Activated CD4-positive, alpha-beta T cell treated with anti-CD3 and anti-CD28 coated beads, Interleukin-2, amount 10 ng/mL, durations not matched to agents 24 days and 14 days (primary cell): ENCODE measurements at regions of chr2 and their contacts with region 1.

Region 1: GRCh38 chr2:239288951-239289511 is 111.8 kb downstream of the HDAC4 start:
- DNase-seq: peak; percentile 88
- H3K4me3 Mint-ChIP-seq: peak overlapping the region; percentile 88
- H3K27ac Mint-ChIP-seq: peak overlapping the region; percentile 97
- H3K4me1 Mint-ChIP-seq: peaks cover 70% of the 10 kb centered on the region
- H3K27me3 Mint-ChIP-seq: peaks cover 10% of the 10 kb centered on the region

Region 2: DNA sequence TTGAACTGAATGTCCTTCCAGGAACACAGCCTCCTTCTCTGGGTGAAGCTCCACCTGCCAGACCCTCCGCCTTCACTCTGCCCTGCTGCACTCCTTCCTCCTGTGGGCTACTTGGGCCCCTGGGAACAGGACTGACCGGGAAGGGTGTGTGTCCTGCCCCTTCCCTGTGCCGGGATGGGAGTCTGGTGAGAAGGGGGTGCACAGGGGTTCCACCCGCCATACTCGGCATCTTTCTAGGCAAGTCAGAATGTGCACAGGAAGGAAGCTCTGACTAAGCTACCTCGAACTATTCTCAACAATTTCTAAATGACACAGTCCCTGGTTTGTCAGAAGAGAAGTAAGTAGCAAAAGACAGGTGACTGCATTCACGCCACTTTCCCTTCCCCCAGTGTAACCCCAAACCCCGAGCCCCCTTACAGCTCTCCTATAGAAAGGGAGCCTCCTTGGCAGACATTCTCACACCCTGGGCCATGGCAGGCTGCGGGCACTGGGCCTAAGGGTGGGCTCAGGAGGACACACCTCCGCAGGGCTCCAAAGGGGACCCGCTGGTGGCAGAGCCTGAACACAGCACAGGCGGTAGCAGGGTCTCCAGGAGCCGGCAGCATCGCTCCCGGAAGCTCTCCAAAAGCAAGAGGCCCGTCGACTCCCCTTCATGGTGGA is 72.3 kb before region 1 on chr2:
- intact Hi-C with region 1: loop called (anchors 2 kb)
- DNase-seq: peak; percentile 78
- H3K4me3 Mint-ChIP-seq: peak overlapping the region; percentile 77
- H3K27ac Mint-ChIP-seq: peak overlapping the region; percentile 91
- H3K4me1 Mint-ChIP-seq: peaks cover 43% of the 10 kb centered on the region
- H3K27me3 Mint-ChIP-seq: no peaks in the 10 kb centered on the region

Region 3: DNA sequence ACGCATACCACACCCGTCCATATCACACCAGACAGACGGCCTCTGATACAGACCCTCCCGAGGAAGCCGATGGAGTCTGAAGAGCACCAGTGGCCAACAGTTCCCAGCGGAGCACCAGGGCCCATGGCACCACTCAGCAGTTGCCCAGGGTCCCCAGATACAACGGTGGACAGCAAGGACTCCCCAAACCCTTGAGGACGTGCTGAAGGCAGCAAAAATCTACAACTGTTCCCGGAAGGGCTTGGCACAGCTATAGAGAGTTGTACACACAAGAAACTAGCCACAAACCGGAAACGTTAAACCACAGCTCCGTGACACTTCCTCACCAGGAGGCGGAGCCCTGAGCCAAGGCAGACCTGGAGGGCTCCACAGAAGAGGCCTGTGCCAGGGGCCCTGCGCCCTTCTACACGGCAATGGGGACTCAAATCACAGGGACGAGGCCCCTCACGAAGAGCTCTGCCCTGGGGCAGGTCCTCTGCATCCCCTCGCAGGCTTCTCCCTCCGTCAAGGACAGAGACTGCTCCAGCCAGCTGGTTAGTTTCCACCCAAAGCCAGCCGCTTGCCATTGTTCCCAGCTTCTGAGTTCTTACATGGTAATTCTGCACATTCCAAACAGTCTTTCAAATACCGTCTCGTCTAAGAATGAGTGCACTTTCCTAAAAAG is 21.6 kb before region 1 on chr2:
- intact Hi-C with region 1: loop called (anchors 1 kb)
- DNase-seq: peak; percentile 98
- H3K4me3 Mint-ChIP-seq: peak overlapping the region; percentile 93
- H3K27ac Mint-ChIP-seq: peak overlapping the region; percentile 84
- H3K4me1 Mint-ChIP-seq: peaks cover 76% of the 10 kb centered on the region
- H3K27me3 Mint-ChIP-seq: peaks cover 12% of the 10 kb centered on the region

Region 4: DNA sequence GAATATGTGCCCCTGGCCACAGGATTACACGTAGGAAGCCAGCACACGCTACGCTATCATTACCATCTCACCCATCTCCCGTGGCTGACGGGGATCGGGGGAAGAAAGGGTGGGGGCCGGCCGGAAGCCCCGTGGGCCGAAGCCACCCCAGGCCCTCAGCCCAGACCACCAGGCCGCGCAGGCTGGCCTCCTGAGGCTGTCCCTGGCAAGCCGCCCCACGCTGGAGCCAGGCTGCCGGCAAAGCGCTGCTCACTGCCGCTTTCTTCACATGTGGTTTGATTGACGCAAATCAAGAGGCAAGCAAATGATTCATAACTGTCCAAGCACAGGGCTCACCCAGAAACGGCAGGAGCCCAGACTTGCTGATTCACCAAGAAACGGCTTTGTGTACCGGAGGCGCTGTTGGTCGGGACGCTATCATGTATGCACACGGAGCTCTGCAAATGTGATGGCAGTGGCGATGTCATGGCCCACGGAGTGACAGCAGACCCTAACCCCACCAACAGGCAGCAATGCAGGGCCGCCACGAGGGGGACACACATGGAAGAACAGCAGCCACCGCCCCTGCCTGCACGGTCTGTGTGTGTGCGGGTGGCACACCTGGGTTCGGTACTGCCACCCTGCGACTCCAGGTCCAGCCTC is 13.9 kb before region 1 on chr2:
- intact Hi-C with region 1: loop called (anchors 1 kb)
- DNase-seq: peak; percentile 95
- H3K4me3 Mint-ChIP-seq: peak overlapping the region; percentile 79
- H3K27ac Mint-ChIP-seq: peak overlapping the region; percentile 87
- H3K4me1 Mint-ChIP-seq: peaks cover 70% of the 10 kb centered on the region
- H3K27me3 Mint-ChIP-seq: peaks cover 9% of the 10 kb centered on the region

Region 5: DNA sequence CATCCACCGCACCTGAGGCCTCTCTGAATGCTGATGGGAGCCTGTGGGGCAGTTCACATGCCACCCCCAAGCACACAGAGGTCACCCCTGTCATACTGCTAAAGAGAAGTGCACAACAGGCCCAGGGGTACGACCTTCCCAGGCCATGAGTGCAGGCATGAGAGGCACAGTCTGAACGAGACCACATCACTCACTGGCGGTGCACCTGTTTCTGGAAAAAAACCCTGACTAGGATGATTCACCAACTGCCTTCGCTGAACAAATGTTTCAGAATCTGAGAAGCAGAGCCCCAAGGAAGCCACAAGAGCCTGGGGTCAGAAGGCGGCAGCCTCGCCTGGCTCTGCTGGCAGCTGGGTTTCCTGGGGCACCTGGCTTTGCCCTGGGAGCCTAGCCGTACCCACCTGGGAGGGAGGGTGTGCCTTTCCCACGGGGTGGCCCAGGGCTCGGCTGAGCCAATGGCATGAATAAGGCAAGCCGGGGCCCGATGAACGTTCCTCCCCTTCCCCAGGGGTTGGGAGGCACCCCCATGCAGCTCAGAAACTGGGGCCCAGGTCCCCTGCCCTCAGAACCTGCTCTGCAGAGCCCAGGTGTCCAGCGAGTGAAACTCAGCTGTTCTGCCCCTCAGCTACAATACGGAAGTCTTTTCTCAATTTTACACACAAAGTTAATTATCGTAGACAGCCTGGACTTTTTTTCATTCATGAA is 38.0 kb after region 1 on chr2:
- intact Hi-C with region 1: loop called (anchors 2 kb)
- DNase-seq: peak; percentile 93
- H3K4me3 Mint-ChIP-seq: peak overlapping the region; percentile 75
- H3K27ac Mint-ChIP-seq: peak overlapping the region; percentile 85
- H3K4me1 Mint-ChIP-seq: peaks cover 74% of the 10 kb centered on the region
- H3K27me3 Mint-ChIP-seq: no peaks in the 10 kb centered on the region

Region 6: DNA sequence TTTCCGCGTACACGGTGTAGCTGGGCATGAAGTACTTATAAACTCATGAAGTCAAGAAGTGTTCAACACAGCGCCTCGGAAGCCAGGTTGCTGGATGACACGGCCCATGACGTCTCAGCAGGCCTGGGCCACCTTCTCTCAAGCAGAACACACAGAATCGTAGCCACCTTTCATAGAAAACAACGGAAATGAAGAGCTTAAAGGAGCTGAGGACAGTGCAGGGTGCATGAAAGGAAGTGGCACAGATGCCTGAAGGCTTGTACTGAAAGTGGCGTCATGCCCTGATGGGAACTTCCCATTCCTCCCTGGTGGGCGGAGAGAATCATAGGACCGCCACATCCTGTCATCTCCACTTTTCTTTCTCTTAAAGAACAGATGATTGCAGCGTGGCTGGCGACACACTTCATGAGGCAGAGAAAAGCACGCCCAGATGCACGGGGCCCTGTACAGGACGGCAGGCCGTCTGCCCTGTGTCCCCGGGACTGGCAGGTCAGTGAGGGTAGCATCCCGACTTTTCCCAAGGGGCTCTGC is 80.7 kb after region 1 on chr2:
- intact Hi-C with region 1: loop called (anchors 5 kb)
- DNase-seq: peak; percentile 95
- H3K4me3 Mint-ChIP-seq: no peak overlapping the region
- H3K27ac Mint-ChIP-seq: no peak overlapping the region
- H3K4me1 Mint-ChIP-seq: peaks cover 11% of the 10 kb centered on the region
- H3K27me3 Mint-ChIP-seq: no peaks in the 10 kb centered on the region

Region 7: DNA sequence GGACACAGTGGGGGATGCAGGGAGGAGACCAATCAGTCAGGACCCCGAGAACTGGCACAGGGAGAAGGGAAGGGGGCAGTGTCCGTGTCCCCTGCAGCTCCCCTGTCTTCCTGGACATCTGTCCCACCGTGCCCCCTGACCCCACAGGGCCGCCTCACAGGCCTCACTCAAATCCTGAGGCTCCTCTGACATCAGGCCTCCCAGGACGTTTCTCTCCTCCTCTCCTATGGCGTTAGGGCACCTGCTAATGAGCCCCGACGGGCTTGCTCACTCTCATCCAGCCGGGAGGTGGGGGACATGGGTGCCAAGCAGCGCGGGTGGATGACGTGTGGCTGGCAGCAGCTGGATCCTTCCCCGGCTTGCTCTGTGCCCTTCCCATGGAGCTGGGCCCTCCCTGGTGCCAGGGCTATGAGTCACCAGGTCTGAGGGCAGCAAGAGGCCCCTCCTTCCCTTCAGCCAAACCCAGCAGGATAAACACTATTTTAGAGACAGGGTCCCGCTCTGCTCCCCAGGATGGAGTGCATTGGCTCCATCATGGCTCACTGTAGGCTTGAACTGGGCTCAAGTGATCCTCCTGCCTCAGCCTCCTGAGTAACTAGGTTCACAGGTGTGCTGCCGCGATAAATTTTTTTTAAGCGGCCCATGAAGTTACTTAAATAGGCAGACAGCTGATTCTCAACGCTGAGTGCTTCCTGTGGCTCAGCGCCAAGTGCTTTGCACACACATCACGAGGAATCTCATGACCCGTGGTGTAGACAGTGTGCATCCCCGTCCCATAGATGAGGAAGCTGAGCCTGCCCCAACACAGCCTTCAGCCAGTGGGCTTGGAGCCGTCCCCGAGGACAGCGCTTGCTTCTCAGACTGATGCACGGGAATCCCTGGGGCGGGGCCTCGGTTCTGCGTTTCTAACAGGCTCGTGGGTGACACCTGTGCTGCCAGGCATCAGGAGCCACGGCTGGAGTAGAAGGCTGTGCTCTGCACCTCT is 176.3 kb after region 1 on chr2:
- intact Hi-C with region 1: no loop called
- DNase-seq: no peak
- H3K4me3 Mint-ChIP-seq: no peak overlapping the region
- H3K27ac Mint-ChIP-seq: no peak overlapping the region
- H3K4me1 Mint-ChIP-seq: no peaks in the 10 kb centered on the region
- H3K27me3 Mint-ChIP-seq: no peaks in the 10 kb centered on the region